ENCODE measurements at regions of chrX and their contacts with region 1.

Region 1: DNA sequence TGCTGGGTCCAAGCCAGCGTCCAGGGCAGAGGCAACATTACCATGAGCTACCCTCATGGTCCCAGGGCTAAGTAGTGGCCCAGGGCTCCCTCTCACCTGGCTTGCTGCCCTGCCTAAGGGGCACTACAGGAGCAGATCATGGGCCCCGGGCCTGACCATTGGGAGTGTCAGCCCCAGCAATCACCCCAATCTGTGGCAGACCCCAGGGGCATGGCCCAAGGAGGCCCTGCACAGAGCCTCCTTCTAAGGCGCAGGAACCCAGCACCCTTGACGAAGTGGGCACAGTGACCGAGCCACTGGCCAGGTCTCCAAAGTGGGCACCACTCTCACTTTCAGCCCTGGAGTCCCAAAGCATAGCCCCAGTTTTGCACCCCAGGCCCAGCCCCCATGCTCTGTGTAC is 667.1 kb downstream of the SH3BGRL start:
- DNase-seq: no peak
- ATAC-seq: no peak

Region 2: DNA sequence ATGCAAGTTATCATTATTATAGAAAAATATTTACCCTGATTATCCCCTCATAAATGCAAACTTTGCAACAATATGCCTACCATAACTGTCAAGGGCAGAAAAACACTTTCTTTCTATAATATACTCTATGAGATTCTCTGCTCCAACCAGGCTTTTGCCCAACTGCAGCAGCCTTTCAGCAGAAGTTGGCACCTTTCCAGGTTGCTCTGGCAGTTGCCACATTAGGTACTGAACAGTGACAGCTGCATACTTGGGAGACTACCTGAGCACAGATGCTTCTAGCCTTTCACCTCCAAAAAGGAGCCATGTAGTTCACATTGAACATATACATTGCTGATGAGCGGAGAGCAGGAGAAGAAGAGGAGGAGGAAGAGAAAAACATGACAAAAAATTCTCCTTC is 989.8 kb before region 1 on chrX:
- intact Hi-C with region 1: no loop called
- DNase-seq: no peak
- ATAC-seq: no peak

Region 3: GRCh38 chrX:81890521-81890920 is 21.5 kb after region 1 on chrX:
- intact Hi-C with region 1: loop called (anchors 2 kb)
- DNase-seq: no peak
- ATAC-seq: no peak

Region 4: GRCh38 chrX:82163701-82164100 is 294.7 kb after region 1 on chrX:
- intact Hi-C with region 1: no loop called
- DNase-seq: no peak
- ATAC-seq: no peak

Region 5: GRCh38 chrX:83145876-83146275 is 1276.9 kb after region 1 on chrX:
- intact Hi-C with region 1: no loop called
- DNase-seq: no peak
- ATAC-seq: no peak